CD4-positive, alpha-beta memory T cell (primary cell): ENCODE measurements at regions of chr13 and their contacts with region 1.

Region 1: GRCh38 chr13:30395192-30396084 is 26.9 kb upstream of the UBE2L5 start:
- DNase-seq: peak; percentile 67 to 90 (median 75)
- H3K4me3 ChIP-seq: peak overlapping the region; percentile 87 to 90
- H3K4me3 Mint-ChIP-seq: peak overlapping the region; percentile 89 to 97 (median 91)
- H3K27ac ChIP-seq: peak overlapping the region; percentile 69
- H3K27ac Mint-ChIP-seq: peak overlapping the region; percentile 84 to 97 (median 95)
- H3K4me1 ChIP-seq: peaks cover 36% of the 10 kb centered on the region
- H3K4me1 Mint-ChIP-seq: peaks cover 19 to 61% (median 38%) of the 10 kb centered on the region in 4 donors
- H3K27me3 ChIP-seq: no peaks in the 10 kb centered on the region
- H3K27me3 Mint-ChIP-seq: no peaks in the 10 kb centered on the region

Region 2: GRCh38 chr13:29902101-29902952 is 493.1 kb before region 1 on chr13:
- CTCF ChIA-PET with region 1: no interaction called
- POLR2A ChIA-PET with region 1: no interaction called
- intact Hi-C with region 1: no loop called
- DNase-seq: peak; percentile 49 to 56 (median 51)
- H3K4me3 ChIP-seq: peak overlapping the region; percentile 7 to 36
- H3K4me3 Mint-ChIP-seq: peak overlapping the region; percentile 86 to 97 (median 92)
- H3K27ac ChIP-seq: peak overlapping the region; percentile 32
- H3K27ac Mint-ChIP-seq: peak overlapping the region; percentile 73 to 97 (median 95)
- H3K4me1 ChIP-seq: peaks cover 28% of the 10 kb centered on the region
- H3K4me1 Mint-ChIP-seq: peaks cover 16 to 29% (median 25%) of the 10 kb centered on the region in 4 donors
- H3K27me3 ChIP-seq: no peaks in the 10 kb centered on the region
- H3K27me3 Mint-ChIP-seq: peaks cover 0 to 1% of the 10 kb centered on the region in 2 donors

Region 3: GRCh38 chr13:30306762-30307193 is 88.7 kb before region 1 on chr13:
- CTCF ChIA-PET with region 1: interaction called, 6 read pairs
- POLR2A ChIA-PET with region 1: interaction called, 9 read pairs
- intact Hi-C with region 1: loop called (anchors 5 kb)
- DNase-seq: peak; percentile 88 to 92 (median 89)
- H3K4me3 ChIP-seq: peak overlapping the region; percentile 55 to 79
- H3K4me3 Mint-ChIP-seq: peak overlapping the region; percentile 90 to 93 (median 91)
- H3K27ac ChIP-seq: peak overlapping the region; percentile 68
- H3K27ac Mint-ChIP-seq: peak overlapping the region; percentile 75 to 93 (median 90)
- H3K4me1 ChIP-seq: peaks cover 28% of the 10 kb centered on the region
- H3K4me1 Mint-ChIP-seq: peaks cover 25 to 46% (median 30%) of the 10 kb centered on the region in 4 donors
- H3K27me3 ChIP-seq: no peaks in the 10 kb centered on the region
- H3K27me3 Mint-ChIP-seq: no peaks in the 10 kb centered on the region

Region 4: DNA sequence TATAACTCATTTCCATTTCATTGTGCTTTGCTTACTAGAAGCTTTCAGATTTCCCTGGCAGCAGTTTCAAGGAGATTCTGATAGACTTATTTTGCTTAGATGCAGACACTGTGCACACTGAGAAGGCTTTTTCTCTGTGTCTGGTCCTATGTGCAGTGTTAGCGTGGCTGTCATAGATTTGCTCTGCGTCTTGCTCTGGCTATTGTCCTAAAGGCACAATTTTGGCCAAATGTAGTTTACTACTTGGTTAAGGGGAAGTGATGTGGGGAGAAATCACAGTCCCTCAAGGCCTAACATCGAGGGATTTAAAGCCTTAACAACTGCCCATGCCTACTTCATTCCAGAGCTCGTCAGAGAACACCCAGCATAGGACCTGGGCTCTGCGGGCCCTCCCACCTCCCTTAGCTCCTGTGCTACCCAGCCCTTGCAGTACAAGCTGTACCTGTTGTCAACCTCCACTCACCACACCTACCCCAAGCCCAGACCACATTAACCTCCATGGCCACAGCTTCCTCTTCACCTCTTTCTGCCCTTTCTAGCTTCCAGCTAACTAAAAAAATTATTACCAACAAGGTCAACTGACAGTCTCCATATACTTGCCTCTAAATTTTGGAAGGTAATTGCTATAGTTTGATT is 49.2 kb before region 1 on chr13:
- CTCF ChIA-PET with region 1: interaction called, 8 read pairs
- POLR2A ChIA-PET with region 1: interaction called, 14 read pairs
- intact Hi-C with region 1: no loop called
- DNase-seq: peak; percentile 76 to 82 (median 79)
- H3K4me3 ChIP-seq: peak overlapping the region in 1 of 2 donors; percentile 10
- H3K4me3 Mint-ChIP-seq: peak overlapping the region; percentile 45 to 88 (median 70)
- H3K27ac ChIP-seq: no peak overlapping the region
- H3K27ac Mint-ChIP-seq: peak overlapping the region; percentile 10 to 86 (median 45)
- H3K4me1 ChIP-seq: peaks cover 42% of the 10 kb centered on the region
- H3K4me1 Mint-ChIP-seq: peaks cover 35 to 48% (median 41%) of the 10 kb centered on the region in 4 donors
- H3K27me3 ChIP-seq: no peaks in the 10 kb centered on the region
- H3K27me3 Mint-ChIP-seq: no peaks in the 10 kb centered on the region

Region 5: DNA sequence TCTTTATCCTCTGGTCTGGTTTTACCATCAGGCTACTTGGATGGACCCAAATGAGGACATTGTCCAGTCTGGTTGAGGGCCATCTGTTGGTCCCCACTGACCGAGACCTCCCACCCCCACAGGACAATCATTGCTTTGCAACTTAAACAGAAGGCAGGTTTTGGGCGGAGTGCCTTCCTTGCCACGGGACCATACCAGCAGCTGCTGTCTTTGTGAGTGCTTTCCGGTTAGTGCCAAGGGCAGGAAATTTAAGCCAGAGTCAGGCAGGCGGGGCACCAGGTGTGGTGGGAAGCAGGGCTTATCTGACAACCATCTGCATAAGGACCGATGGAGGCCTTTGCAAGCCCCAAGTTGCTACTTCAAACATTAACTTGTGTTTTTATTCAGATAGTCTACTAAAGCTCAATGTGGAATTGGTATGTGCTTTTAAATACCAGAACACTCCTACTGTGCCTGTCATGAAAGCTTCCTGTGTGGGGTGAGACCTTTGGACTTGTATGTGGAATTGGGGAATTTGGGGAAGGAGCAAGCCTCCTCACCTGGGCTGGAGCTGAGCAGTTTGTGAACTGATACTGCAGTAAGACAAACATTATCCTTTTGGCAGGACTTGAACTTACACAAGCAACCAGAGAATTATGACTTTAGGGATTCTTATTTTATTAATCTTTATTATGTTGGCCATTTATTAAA is 12.5 kb before region 1 on chr13:
- CTCF ChIA-PET with region 1: interaction called, 17 read pairs
- POLR2A ChIA-PET with region 1: interaction called, 56 read pairs
- intact Hi-C with region 1: no loop called
- DNase-seq: no peak
- H3K4me3 ChIP-seq: no peak overlapping the region
- H3K4me3 Mint-ChIP-seq: peak overlapping the region in 7 of 8 donors; percentile 20 to 77 (median 39)
- H3K27ac ChIP-seq: no peak overlapping the region
- H3K27ac Mint-ChIP-seq: peak overlapping the region in 6 of 7 donors; percentile 1 to 85 (median 24)
- H3K4me1 ChIP-seq: peaks cover 34% of the 10 kb centered on the region
- H3K4me1 Mint-ChIP-seq: peaks cover 35 to 48% (median 36%) of the 10 kb centered on the region in 4 donors
- H3K27me3 ChIP-seq: no peaks in the 10 kb centered on the region
- H3K27me3 Mint-ChIP-seq: no peaks in the 10 kb centered on the region

Region 6: DNA sequence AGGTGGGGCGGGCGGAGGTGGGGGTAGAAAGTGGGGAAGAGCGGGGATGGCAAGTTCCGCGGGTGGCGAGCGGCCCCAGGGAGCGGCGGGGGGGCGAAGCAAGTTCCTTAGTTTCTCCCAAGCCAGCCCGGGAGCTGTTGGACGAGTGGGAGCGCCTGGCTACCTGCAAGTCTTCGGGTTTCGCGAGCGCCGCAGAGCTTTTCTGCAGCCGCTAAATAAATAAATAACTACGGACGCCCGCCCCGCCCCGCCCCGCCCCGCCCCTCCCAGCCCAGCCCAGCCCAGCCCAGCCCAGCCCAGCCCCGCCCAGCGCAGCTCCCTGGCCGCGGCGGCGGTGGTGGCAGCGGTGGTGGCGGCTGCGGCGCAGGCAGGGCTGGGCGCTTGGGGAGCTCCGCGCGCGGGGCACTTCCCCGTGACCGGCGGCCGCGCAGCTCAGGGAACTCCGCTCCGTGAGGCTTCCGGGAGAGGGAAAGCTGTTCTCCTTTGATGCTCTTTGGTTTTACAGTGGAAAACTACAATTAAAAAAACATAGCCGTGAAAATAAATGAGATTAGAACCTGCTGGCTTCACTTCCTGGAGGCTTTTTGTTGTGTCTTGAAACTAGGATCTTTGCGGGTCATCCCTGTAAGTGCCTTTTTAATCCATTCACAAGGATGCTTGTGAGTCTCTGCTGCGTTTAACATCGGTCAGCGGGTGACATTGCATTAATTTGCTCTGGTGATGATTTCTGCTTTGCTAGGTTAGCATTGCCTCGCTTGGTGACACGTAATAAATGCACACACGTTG is 26.8 kb after region 1 on chr13 and contains the start of gene UBE2L5:
- CTCF ChIA-PET with region 1: no interaction called
- POLR2A ChIA-PET with region 1: interaction called, 15 read pairs
- intact Hi-C with region 1: loop called (anchors 1 kb)
- DNase-seq: peak; percentile 68 to 77 (median 71)
- H3K4me3 ChIP-seq: peak within 1 kb of the TSS; percentile 42 to 58
- H3K4me3 Mint-ChIP-seq: peak within 1 kb of the TSS; percentile 81 to 94 (median 88)
- H3K27ac ChIP-seq: peak within 1 kb of the TSS; percentile 1
- H3K27ac Mint-ChIP-seq: peak within 1 kb of the TSS; percentile 78 to 93 (median 87)
- H3K4me1 ChIP-seq: peaks cover 19% of the 10 kb centered on the region
- H3K4me1 Mint-ChIP-seq: peaks cover 13 to 27% (median 18%) of the 10 kb centered on the region in 4 donors
- H3K27me3 ChIP-seq: no peaks in the 10 kb centered on the region
- H3K27me3 Mint-ChIP-seq: no peaks in the 10 kb centered on the region
- total RNA-seq, gene UBE2L5: not detected

Region 7: DNA sequence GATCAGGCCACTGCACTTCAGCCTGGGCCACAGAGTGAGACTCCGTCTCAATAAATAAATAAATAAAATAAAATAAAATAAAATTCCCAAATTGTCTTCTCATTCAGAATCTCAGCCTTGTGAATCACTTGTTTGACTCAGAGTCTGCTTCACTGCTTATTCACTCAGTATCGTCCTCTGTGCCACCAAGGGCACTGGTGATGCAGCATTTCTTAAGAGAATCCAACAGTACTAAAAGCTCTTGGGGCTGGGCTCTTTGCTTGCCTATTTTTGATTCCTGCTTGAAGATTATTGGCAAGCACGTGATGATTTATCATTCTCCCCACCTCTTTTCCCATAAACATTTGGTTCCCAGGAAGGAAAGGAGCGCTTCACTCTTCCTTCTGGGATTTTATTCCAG is 125.1 kb after region 1 on chr13:
- CTCF ChIA-PET with region 1: no interaction called
- POLR2A ChIA-PET with region 1: no interaction called
- intact Hi-C with region 1: no loop called
- DNase-seq: no peak
- H3K4me3 ChIP-seq: no peak overlapping the region
- H3K4me3 Mint-ChIP-seq: no peak overlapping the region
- H3K27ac ChIP-seq: no peak overlapping the region
- H3K27ac Mint-ChIP-seq: no peak overlapping the region
- H3K4me1 ChIP-seq: no peaks in the 10 kb centered on the region
- H3K4me1 Mint-ChIP-seq: peaks cover 4 to 7% (median 4%) of the 10 kb centered on the region in 4 donors
- H3K27me3 ChIP-seq: no peaks in the 10 kb centered on the region
- H3K27me3 Mint-ChIP-seq: no peaks in the 10 kb centered on the region